ENCODE measurements at regions of chr17 and their contacts with region 1.

Region 1: DNA sequence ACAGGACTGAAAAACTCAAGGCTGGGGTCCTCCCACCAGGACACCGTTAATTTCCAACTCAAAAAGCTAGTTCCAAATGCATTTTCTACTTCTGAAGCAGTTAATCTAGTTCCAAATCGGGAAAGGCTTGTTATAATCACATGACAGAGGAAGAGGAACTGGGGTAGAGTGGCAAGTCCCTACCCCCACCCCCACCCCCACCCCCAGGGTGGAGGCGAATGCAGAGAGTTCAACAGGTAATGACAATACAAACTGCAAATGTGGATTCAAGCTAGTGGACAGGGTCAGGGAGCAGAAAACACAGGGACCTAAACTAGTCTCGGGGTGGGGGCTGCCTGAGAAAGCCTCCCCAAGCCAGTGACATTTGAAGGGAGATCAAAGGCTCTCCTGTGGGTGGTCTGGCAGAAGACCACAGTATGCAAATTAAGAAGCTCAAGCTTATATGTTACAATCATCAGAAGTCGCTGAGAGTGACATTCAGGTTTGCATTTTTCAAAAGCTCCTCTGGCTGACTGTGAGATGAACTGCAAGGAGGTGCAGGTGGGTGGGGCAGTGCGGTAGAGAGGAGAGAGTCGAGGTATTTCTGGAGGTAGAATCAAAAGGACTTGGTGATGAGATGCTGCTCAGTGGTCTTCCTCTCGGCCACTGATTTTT is 56.4 kb upstream of the SLC25A19 start:
- DNase-seq: peak; percentile 92
- ATAC-seq: peak; percentile 84
- H3K4me3 ChIP-seq: peak overlapping the region; percentile 48 to 70 (median 61)
- H3K4me3 Mint-ChIP-seq: peak overlapping the region; percentile 86
- H3K27ac ChIP-seq: peak overlapping the region; percentile 97 to 99
- H3K27ac Mint-ChIP-seq: peak overlapping the region; percentile 89
- H3K4me1 ChIP-seq: peaks cover 78 to 94% of the 10 kb centered on the region in 2 donors
- H3K4me1 Mint-ChIP-seq: peaks cover 85% of the 10 kb centered on the region
- H3K27me3 ChIP-seq: no peaks in the 10 kb centered on the region
- H3K27me3 Mint-ChIP-seq: no peaks in the 10 kb centered on the region
- CTCF ChIP-seq: no peak

Region 2: DNA sequence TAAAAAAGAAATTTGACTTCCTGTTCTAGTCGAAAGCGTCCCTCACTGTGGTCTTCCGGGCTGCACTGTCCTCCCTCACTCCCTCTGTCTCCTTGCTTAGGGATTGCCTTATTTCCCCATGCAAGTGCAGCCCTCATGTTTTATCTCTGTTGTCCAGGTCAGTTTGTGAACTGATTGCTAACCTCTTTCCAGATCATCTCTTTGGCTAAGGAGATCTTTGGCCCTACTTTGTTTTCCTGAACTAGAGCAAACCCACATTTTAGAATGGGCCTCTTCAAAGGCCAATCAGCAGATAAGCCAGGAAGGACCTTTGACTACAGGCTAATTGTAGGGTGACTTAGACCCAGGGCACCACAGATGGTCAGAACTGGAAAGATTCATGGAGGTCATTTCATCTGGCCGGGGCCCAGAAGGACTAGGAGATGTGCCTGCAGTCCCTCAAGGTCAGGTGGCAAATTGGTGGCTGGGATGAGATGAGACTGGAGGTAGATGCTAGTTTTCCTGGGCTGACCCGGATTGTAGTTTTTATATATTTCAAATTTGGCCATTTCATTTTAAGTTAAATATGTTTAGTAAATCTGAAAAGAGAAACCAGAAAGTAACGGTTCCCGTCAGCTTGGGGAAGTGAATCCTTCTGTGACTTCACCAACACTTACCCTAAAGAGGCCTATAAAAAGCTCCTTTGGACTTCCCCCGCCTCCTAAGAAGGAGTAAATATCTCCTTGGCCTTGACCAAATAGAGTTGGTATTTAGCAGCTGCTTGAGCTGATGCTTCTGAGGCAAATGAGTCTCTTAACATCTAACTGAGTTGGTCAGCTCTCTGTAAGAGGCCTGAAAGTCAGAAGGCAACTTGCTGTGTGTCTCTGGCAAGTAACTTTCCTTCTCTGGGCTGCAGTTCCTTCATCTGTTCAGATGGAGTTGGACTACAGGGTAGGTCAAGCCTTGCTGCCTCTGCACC is 50.2 kb before region 1 on chr17:
- CTCF ChIA-PET with region 1: interaction called, 23 read pairs
- POLR2A ChIA-PET with region 1: interaction called, 13 read pairs
- intact Hi-C with region 1: loop called (anchors 1 kb)
- DNase-seq: peak; percentile 92
- ATAC-seq: peak; percentile 70
- H3K4me3 ChIP-seq: peak overlapping the region in 4 of 5 experiments; percentile 12 to 59 (median 28)
- H3K4me3 Mint-ChIP-seq: peak overlapping the region; percentile 62
- H3K27ac ChIP-seq: peak overlapping the region; percentile 98
- H3K27ac Mint-ChIP-seq: peak overlapping the region; percentile 95
- H3K4me1 ChIP-seq: peaks cover 52 to 69% of the 10 kb centered on the region in 2 donors
- H3K4me1 Mint-ChIP-seq: peaks cover 43% of the 10 kb centered on the region
- H3K27me3 ChIP-seq: no peaks in the 10 kb centered on the region
- H3K27me3 Mint-ChIP-seq: no peaks in the 10 kb centered on the region
- CTCF ChIP-seq: no peak

Region 3: GRCh38 chr17:75331671-75332070 is 14.0 kb before region 1 on chr17:
- CTCF ChIA-PET with region 1: interaction called, 264 read pairs
- POLR2A ChIA-PET with region 1: interaction called, 11 read pairs
- intact Hi-C with region 1: loop called (anchors 2 kb)
- DNase-seq: peak; percentile 23
- ATAC-seq: peak; percentile 45
- H3K4me3 ChIP-seq: no peak overlapping the region
- H3K4me3 Mint-ChIP-seq: peak overlapping the region; percentile 16
- H3K27ac ChIP-seq: peak overlapping the region; percentile 15 to 71
- H3K27ac Mint-ChIP-seq: peak overlapping the region; percentile 68
- H3K4me1 ChIP-seq: peaks cover 72% of the 10 kb centered on the region in 2 donors
- H3K4me1 Mint-ChIP-seq: peaks cover 70% of the 10 kb centered on the region
- H3K27me3 ChIP-seq: no peaks in the 10 kb centered on the region
- H3K27me3 Mint-ChIP-seq: no peaks in the 10 kb centered on the region
- CTCF ChIP-seq: no peak

Region 4: GRCh38 chr17:75371339-75371738 is 25.7 kb after region 1 on chr17:
- CTCF ChIA-PET with region 1: interaction called, 6 read pairs
- POLR2A ChIA-PET with region 1: interaction called, 4 read pairs
- intact Hi-C with region 1: loop called (anchors 2 kb)
- DNase-seq: peak; percentile 73
- ATAC-seq: peak; percentile 62
- H3K4me3 ChIP-seq: peak overlapping the region in 1 of 5 experiments; percentile 3
- H3K4me3 Mint-ChIP-seq: peak overlapping the region; percentile 74
- H3K27ac ChIP-seq: peak overlapping the region; percentile 42 to 76
- H3K27ac Mint-ChIP-seq: peak overlapping the region; percentile 84
- H3K4me1 ChIP-seq: peaks cover 64 to 85% of the 10 kb centered on the region in 2 donors
- H3K4me1 Mint-ChIP-seq: peaks cover 80% of the 10 kb centered on the region
- H3K27me3 ChIP-seq: no peaks in the 10 kb centered on the region
- H3K27me3 Mint-ChIP-seq: no peaks in the 10 kb centered on the region
- CTCF ChIP-seq: no peak

Region 5: DNA sequence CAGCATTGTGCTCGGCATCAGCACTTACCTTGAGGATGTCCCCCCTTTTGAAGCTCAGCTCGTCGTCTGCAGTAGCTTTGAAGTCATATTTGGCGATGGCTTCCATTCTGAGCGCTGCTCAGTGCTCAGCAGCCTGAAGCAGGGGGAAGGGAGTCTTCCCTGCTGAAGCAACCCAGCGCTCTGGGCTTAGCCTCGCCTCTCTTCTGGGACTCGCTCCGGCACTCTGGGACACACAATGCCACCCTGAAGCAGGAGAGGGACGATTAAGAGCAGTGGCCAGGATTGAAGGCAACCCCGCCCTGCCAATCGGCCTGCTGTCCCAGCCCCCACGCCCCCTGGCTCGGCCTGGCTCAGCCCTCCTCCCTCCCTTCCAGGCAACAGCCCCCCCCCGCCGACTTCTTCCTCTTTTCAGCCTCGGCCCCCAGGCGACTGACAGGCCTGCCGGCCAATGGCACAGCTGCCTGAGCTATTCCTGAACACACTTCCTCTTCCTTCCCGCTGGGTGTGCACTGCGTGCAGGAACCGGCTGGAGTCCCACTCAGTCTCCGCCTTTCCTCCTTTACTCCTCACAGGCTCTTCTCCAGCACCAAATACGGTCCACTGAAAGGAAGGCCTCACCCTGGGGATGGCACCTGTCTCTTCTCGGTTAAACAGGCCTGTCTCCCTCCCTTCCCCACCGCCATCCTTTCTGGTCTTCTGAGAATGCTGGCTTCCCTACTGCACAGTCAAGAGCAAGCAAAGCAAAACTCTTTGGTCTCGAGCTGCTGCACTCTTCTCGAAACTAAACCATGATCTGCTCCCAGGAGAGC is 48.1 kb after region 1 on chr17:
- CTCF ChIA-PET with region 1: interaction called, 19 read pairs
- POLR2A ChIA-PET with region 1: interaction called, 11 read pairs
- intact Hi-C with region 1: no loop called
- DNase-seq: peak; percentile 94
- ATAC-seq: peak; percentile 95
- H3K4me3 ChIP-seq: peak overlapping the region; percentile 49 to 78 (median 63)
- H3K4me3 Mint-ChIP-seq: peak overlapping the region; percentile 86
- H3K27ac ChIP-seq: peak overlapping the region; percentile 17 to 79
- H3K27ac Mint-ChIP-seq: peak overlapping the region; percentile 79
- H3K4me1 ChIP-seq: peaks cover 68 to 76% of the 10 kb centered on the region in 2 donors
- H3K4me1 Mint-ChIP-seq: peaks cover 81% of the 10 kb centered on the region
- H3K27me3 ChIP-seq: no peaks in the 10 kb centered on the region
- H3K27me3 Mint-ChIP-seq: no peaks in the 10 kb centered on the region
- CTCF ChIP-seq: peak; percentile 12

Region 6: GRCh38 chr17:75412455-75413317 is 67.0 kb after region 1 on chr17:
- CTCF ChIA-PET with region 1: interaction called, 15 read pairs
- POLR2A ChIA-PET with region 1: interaction called, 10 read pairs
- intact Hi-C with region 1: no loop called
- DNase-seq: peak; percentile 90
- ATAC-seq: peak; percentile 94
- H3K4me3 ChIP-seq: peak overlapping the region in 4 of 5 experiments; percentile 9 to 30 (median 23)
- H3K4me3 Mint-ChIP-seq: peak overlapping the region; percentile 68
- H3K27ac ChIP-seq: no peak overlapping the region
- H3K27ac Mint-ChIP-seq: peak overlapping the region; percentile 62
- H3K4me1 ChIP-seq: peaks cover 7 to 14% of the 10 kb centered on the region in 2 donors
- H3K4me1 Mint-ChIP-seq: peaks cover 13% of the 10 kb centered on the region
- H3K27me3 ChIP-seq: no peaks in the 10 kb centered on the region
- H3K27me3 Mint-ChIP-seq: no peaks in the 10 kb centered on the region
- CTCF ChIP-seq: peak; percentile 79

Region 7: GRCh38 chr17:75658237-75658636 is 312.6 kb after region 1 on chr17:
- CTCF ChIA-PET with region 1: no interaction called
- POLR2A ChIA-PET with region 1: no interaction called
- intact Hi-C with region 1: no loop called
- DNase-seq: no peak
- ATAC-seq: no peak
- H3K4me3 ChIP-seq: no peak overlapping the region
- H3K4me3 Mint-ChIP-seq: no peak overlapping the region
- H3K27ac ChIP-seq: no peak overlapping the region
- H3K27ac Mint-ChIP-seq: no peak overlapping the region
- H3K4me1 ChIP-seq: peaks cover 0 to under 1% of the 10 kb centered on the region in 2 donors
- H3K4me1 Mint-ChIP-seq: peaks cover 10% of the 10 kb centered on the region
- H3K27me3 ChIP-seq: no peaks in the 10 kb centered on the region
- H3K27me3 Mint-ChIP-seq: no peaks in the 10 kb centered on the region
- CTCF ChIP-seq: no peak